CD14-positive monocyte (primary cell): ENCODE measurements at regions of chr2 and their contacts with region 1.

Region 1: DNA sequence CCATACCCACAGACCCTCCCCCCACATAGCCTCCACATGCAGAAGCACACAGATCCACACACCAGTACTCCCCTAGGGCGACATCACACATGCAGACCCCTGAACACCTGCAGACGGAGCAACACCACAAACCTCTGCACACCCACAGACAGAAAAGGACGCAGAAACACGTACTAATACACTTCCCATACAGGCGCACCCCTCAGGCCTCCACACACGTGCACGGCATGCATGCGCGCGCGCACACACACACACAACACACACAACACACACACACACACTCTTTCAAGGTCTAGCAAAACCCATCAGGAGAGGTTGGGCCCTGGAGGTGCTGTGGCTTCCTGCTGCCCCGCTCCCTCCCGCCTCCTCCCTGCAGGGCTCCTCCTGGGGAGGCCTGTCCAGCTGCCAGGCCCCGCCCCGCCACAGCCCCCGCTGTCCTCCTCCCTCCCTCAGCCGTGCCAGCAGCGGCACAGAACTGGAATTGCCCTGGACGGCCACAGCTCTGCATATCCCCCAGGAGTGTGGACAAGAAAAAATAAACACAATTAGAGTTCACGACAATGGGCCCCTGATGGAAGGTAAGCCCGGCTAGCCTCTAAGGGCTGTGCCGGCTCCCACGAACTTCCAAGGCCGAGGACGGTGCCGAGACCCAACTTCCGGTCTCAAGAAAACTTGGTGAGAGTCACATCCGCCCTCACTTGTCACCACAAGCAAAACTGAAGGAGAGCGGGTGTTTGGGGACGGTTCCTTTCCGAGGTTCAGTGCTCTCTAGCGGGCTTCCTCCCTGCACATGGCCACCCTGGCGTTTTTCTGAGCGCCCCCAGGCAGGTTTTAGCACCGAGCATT is 6.8 kb downstream of the ZFP36L2 start:
- DNase-seq: peak; percentile 82 to 85 (median 84)
- H3K4me3 ChIP-seq: peak overlapping the region; percentile 83 to 99 (median 87)
- H3K4me3 Mint-ChIP-seq: peak overlapping the region; percentile 98 to 100
- H3K27ac ChIP-seq: peak overlapping the region; percentile 88 to 92
- H3K27ac Mint-ChIP-seq: peak overlapping the region; percentile 98 to 99 (median 98)
- H3K4me1 ChIP-seq: peaks cover 48 to 75% of the 10 kb centered on the region in 2 donors
- H3K4me1 Mint-ChIP-seq: peaks cover 56% of the 10 kb centered on the region
- H3K27me3 ChIP-seq: no peaks in the 10 kb centered on the region
- H3K27me3 Mint-ChIP-seq: peaks cover 0 to 4% (median 0%) of the 10 kb centered on the region in 3 donors
- CTCF ChIP-seq: no peak

Region 2: GRCh38 chr2:42810121-42810970 is 409.3 kb before region 1 on chr2:
- intact Hi-C with region 1: loop called in 1 of 2 experiments (anchors 10 kb)
- DNase-seq: peak; percentile 95 to 96 (median 95)
- H3K4me3 ChIP-seq: peak overlapping the region; percentile 42 to 79 (median 57)
- H3K4me3 Mint-ChIP-seq: peak overlapping the region; percentile 90 to 94
- H3K27ac ChIP-seq: peak overlapping the region; percentile 92 to 93
- H3K27ac Mint-ChIP-seq: peak overlapping the region; percentile 93 to 99 (median 97)
- H3K4me1 ChIP-seq: peaks cover 21 to 26% of the 10 kb centered on the region in 2 donors
- H3K4me1 Mint-ChIP-seq: peaks cover 39% of the 10 kb centered on the region
- H3K27me3 ChIP-seq: no peaks in the 10 kb centered on the region
- H3K27me3 Mint-ChIP-seq: peaks cover 1 to 7% (median 6%) of the 10 kb centered on the region in 3 donors
- CTCF ChIP-seq: no peak

Region 3: DNA sequence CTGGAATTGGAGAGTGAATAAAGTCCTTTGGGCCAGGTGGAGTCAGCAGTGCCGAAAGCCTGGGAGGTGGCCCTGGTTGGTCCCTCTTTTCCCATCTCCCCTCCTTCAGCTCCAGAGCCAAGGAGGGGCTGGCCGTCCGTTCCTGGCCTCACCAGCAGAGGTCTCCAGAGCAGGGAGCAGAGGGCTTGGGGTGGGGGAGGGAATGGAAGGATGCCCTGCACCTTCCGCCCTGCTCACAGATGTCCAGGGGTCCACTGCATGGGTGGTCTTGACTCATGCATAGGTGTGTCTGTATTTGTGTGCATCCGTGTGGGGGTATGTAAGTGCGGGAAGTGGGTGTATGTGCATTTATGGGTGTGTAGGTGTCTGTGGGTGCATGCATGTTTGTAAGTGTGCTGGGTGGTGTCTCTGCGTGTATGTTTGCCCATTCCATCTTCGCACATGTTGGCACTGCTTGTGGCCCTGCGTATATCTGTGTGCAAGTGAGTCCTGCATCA is 195.0 kb before region 1 on chr2:
- intact Hi-C with region 1: loop called in 1 of 2 experiments (anchors 5 kb)
- DNase-seq: peak; percentile 30 to 46 (median 43)
- H3K4me3 ChIP-seq: no peak overlapping the region
- H3K4me3 Mint-ChIP-seq: no peak overlapping the region
- H3K27ac ChIP-seq: peak overlapping the region in 1 of 2 donors; percentile 65
- H3K27ac Mint-ChIP-seq: peak overlapping the region in 5 of 7 donors; percentile 17 to 77 (median 51)
- H3K4me1 ChIP-seq: peaks cover 73 to 76% of the 10 kb centered on the region in 2 donors
- H3K4me1 Mint-ChIP-seq: peaks cover 81% of the 10 kb centered on the region
- H3K27me3 ChIP-seq: no peaks in the 10 kb centered on the region
- H3K27me3 Mint-ChIP-seq: peaks cover 0 to 3% (median 1%) of the 10 kb centered on the region in 3 donors
- CTCF ChIP-seq: peak; percentile 72

Region 4: GRCh38 chr2:43158259-43158880 is 61.2 kb before region 1 on chr2:
- intact Hi-C with region 1: loop called in 1 of 2 experiments (anchors 5 kb)
- DNase-seq: peak; percentile 73 to 85 (median 77)
- H3K4me3 ChIP-seq: peak overlapping the region in 1 of 3 experiments; percentile 57
- H3K4me3 Mint-ChIP-seq: peak overlapping the region; percentile 65 to 83
- H3K27ac ChIP-seq: peak overlapping the region; percentile 90 to 93
- H3K27ac Mint-ChIP-seq: peak overlapping the region; percentile 97 to 100 (median 99)
- H3K4me1 ChIP-seq: peaks cover 61 to 65% of the 10 kb centered on the region in 2 donors
- H3K4me1 Mint-ChIP-seq: peaks cover 62% of the 10 kb centered on the region
- H3K27me3 ChIP-seq: no peaks in the 10 kb centered on the region
- H3K27me3 Mint-ChIP-seq: peaks cover 0 to 8% (median 3%) of the 10 kb centered on the region in 3 donors
- CTCF ChIP-seq: no peak

Region 5: DNA sequence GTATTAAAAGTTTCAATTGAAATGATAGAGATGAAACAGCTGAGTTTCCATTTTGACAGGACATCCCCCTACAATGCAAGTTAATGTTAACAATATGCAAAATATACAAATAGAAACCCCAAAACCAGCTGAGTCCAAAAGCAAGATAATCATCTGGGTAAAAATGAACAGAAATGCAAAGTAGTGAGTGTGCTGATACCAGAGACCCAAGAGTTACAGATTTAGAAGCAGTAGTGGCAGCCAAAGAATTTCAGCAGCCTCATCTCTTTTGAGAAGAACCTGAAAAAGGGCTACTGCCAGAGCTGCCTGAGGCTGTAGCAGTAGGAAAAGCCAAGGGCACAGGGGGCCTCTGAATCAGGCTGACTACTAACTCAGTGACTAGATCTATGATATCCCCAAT is 293.6 kb after region 1 on chr2:
- intact Hi-C with region 1: no loop called
- DNase-seq: no peak
- H3K4me3 ChIP-seq: no peak overlapping the region
- H3K4me3 Mint-ChIP-seq: no peak overlapping the region
- H3K27ac ChIP-seq: no peak overlapping the region
- H3K27ac Mint-ChIP-seq: no peak overlapping the region
- H3K4me1 ChIP-seq: no peaks in the 10 kb centered on the region
- H3K4me1 Mint-ChIP-seq: peaks cover under 1% of the 10 kb centered on the region
- H3K27me3 ChIP-seq: no peaks in the 10 kb centered on the region
- H3K27me3 Mint-ChIP-seq: peaks cover 0 to 1% (median 0%) of the 10 kb centered on the region in 3 donors
- CTCF ChIP-seq: no peak